Panc1 (cell line): ENCODE measurements at regions of chr1 and their contacts with region 1.

Region 1: DNA sequence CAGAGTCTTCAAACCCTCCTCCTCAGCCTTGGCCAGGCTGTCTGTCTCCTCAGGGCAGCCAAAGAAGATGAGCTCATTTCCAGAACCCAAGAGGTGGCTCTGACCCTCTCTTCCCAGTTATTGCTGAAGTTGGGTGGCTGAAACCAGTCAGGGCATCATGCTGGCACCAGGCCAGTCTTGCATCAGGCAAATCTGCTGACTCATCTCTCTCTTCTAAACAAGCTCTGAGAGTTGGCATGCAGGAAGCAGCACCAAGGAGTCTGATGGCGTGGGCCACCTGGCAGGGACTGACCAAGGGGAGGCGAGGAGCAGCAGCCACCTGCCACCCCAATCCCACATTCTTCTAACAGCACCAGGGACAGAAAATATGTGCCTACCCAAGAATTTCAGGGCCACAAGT is 104.8 kb upstream of the ATP1A1 start:
- DNase-seq: no peak
- ATAC-seq: no peak
- H3K4me3 ChIP-seq: no peak overlapping the region
- H3K27ac ChIP-seq: no peak overlapping the region
- H3K4me1 ChIP-seq: no peaks in the 10 kb centered on the region
- H3K27me3 ChIP-seq: no peaks in the 10 kb centered on the region
- CTCF ChIP-seq: no peak

Region 2: DNA sequence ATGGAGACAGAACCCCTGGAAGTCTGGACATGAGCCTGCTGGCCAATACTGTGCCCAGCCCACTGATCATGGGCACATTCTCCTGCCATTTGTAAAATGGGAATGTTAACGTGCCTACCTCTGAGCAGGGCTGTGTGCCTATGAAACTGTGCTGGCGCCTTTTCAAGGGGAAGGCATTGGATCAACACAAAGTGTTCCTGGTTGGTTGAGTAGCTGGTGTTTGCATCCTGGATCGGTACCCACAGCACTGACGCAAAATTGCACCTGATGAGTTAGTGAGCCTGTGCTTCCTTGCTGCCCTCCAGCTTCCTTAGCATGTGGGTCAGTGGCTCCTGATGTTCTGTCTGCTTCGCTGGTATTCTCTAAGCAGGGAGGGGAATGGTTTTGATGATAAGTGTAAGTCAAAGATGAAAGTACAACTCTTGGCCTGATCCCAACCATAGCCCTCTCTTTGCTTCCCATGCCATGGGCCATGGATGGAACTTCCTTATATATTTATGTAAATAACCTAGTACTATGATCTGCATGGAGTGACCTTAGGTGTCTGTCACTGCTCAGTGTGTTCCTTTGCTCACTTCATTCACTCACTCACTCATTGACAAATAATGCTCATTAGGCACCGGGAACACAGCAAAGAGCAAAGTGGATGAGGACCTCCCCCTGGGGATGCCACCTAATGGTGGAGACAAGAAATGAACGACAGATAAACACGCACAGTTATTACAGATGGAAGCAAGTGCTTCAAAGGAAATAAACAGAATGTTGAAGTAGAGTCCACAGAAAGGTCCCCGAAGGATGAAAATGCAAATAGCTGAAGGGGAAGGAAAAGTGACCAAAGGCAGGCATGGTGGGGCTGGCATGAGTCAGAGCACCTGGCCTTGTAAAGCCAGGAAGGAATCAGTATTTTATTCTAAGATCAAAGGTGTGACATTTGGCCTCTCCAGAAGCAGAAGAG is 134.2 kb before region 1 on chr1:
- CTCF ChIA-PET with region 1: no interaction called
- POLR2A ChIA-PET with region 1: no interaction called
- in situ Hi-C with region 1: no loop called
- intact Hi-C with region 1: no loop called
- DNase-seq: no peak
- ATAC-seq: no peak
- H3K4me3 ChIP-seq: no peak overlapping the region
- H3K27ac ChIP-seq: no peak overlapping the region
- H3K4me1 ChIP-seq: no peaks in the 10 kb centered on the region
- H3K27me3 ChIP-seq: no peaks in the 10 kb centered on the region
- CTCF ChIP-seq: peak; percentile 23; the same call in 1 of the 2 replicates

Region 3: DNA sequence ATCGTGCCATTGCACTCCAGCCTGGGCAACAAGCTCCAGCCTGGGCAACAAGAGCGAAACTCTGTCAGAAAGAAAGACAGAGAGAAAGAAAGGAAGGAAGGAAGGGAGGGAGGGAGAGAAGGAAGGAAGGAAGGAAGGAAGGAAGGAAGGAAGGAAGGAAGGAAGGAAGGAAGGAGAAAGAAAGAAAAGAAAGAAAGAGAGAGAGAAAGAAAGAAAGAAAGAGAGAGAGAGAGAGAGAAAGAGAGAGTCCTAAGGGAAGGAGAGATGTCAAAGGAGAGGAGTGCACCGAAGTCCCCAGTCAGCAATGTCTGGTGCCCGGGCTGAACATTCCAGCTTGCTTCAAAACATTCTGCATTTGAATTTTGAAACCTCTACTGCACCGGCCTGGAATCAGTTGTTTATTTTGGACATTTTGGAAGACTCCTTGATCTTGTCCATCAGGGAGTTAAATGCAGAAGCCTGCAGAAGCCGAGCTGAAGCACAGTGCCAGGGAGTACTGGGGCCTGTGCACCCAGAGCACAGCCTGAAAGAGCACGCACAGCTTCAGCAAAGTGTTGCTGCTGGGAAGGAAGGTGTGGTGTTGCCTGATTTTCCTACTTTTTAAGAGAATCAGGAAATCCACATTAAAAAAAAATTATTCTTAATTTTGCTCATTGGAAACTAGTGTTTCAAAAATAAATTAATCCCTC is 403.0 kb after region 1 on chr1:
- CTCF ChIA-PET with region 1: interaction called, 15 read pairs
- POLR2A ChIA-PET with region 1: no interaction called
- in situ Hi-C with region 1: no loop called
- intact Hi-C with region 1: no loop called
- DNase-seq: no peak
- ATAC-seq: no peak
- H3K4me3 ChIP-seq: no peak overlapping the region
- H3K27ac ChIP-seq: no peak overlapping the region
- H3K4me1 ChIP-seq: peaks cover 5% of the 10 kb centered on the region
- H3K27me3 ChIP-seq: peaks cover 2% of the 10 kb centered on the region; the same call in 1 of the 2 replicates
- CTCF ChIP-seq: no peak